ENCODE measurements at regions of chr13 and their contacts with region 1.

Region 1: DNA sequence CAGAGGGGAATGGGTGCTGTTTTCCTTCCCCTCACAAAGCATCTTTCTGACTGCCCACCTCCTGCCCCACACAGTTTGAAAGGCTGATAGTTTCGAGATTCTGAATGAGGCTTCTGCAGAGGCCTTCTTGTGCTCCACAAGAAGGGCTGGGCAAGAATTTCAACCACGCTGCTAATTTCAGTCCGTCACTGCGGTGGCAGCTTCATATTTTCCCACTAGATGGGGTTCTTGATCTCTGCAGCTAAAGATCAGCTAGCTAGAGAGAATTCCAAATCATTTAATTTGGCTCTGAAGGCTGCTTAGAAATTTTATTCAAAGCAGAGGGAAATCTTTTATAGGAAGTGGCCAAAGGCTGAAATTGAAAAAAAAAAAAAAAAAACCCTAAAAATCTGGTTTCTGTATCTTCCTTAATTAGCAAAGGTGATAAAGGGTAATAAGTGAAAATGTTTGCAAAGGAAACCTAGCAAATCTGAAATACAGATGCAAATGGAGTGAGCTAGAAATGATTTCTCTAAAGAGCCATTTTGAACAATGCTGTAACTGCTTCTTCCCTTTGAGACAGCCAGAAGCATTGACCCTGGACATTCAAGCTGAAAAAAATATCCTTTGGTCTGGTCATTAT is 38.0 kb upstream of the C13orf42 start:
- DNase-seq: peak; percentile 50
- ATAC-seq: peak; percentile 87
- H3K4me3 ChIP-seq: no peak overlapping the region
- H3K27ac ChIP-seq: no peak overlapping the region
- H3K4me1 ChIP-seq: no peaks in the 10 kb centered on the region
- H3K27me3 ChIP-seq: peaks cover 17% of the 10 kb centered on the region
- CTCF ChIP-seq: peak; percentile 72

Region 2: GRCh38 chr13:51125498-51126226 is 23.4 kb before region 1 on chr13:
- CTCF ChIA-PET with region 1: interaction called, 33 read pairs
- POLR2A ChIA-PET with region 1: no interaction called
- intact Hi-C with region 1: no loop called
- DNase-seq: peak; percentile 61
- ATAC-seq: peak; percentile 96
- H3K4me3 ChIP-seq: no peak overlapping the region
- H3K27ac ChIP-seq: no peak overlapping the region
- H3K4me1 ChIP-seq: no peaks in the 10 kb centered on the region
- H3K27me3 ChIP-seq: no peaks in the 10 kb centered on the region
- CTCF ChIP-seq: peak; percentile 86

Region 3: GRCh38 chr13:51849145-51850101 is 700.4 kb after region 1 on chr13:
- CTCF ChIA-PET with region 1: no interaction called
- POLR2A ChIA-PET with region 1: no interaction called
- intact Hi-C with region 1: no loop called
- DNase-seq: peak; percentile 10
- ATAC-seq: peak; percentile 35
- H3K4me3 ChIP-seq: no peak overlapping the region
- H3K27ac ChIP-seq: peak overlapping the region; percentile 48
- H3K4me1 ChIP-seq: peaks cover 18% of the 10 kb centered on the region
- H3K27me3 ChIP-seq: no peaks in the 10 kb centered on the region
- CTCF ChIP-seq: peak; percentile 65